Adrenal gland (tissue), 19 donors: ENCODE measurements at regions of chr2 and their contacts with region 1.

Region 1: GRCh38 chr2:102806250-102806837 is 44.5 kb downstream of the TMEM182 start:
- DNase-seq: peak; percentile 57 to 91 (median 75)
- H3K4me3 ChIP-seq: no peak overlapping the region
- H3K27ac ChIP-seq: no peak overlapping the region
- H3K4me1 ChIP-seq: no peaks in the 10 kb centered on the region
- H3K27me3 ChIP-seq: no peaks in the 10 kb centered on the region
- CTCF ChIP-seq: peak; percentile 47 to 74 (median 70)
- POLR2A ChIP-seq: no peak

Region 2: DNA sequence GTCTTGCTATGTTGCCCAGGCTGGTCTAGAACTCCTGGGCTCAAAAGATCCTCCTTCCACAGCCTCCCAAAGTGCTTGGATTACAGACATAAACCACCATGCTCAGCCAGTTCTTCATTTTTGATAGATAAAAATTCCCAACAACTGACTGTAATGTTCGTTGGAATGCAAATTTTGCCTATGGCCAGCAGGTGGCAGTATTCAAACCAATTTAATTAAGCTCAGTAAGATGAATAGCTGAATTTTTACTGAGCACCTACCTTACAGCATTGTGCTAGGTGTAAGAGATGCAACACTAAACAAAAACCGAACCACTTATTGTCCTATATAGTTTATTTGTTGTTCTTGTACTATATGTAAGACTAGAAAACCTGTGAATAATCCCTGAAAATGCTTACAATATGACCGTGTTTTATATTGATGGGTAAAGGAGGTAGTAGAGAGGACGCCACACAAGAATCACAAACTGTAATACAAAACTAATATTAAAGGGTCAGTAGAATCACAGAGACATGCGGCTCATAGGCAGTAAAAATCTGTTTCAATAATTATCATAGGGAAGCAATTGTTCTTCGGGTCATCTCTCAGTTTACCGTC is 52.7 kb before region 1 on chr2:
- intact Hi-C with region 1: loop called (anchors 5 to 10 kb)
- DNase-seq: peak in 6 of 7 donors; percentile 8 to 71 (median 40)
- H3K4me3 ChIP-seq: no peak overlapping the region
- H3K27ac ChIP-seq: no peak overlapping the region
- H3K4me1 ChIP-seq: no peaks in the 10 kb centered on the region
- H3K27me3 ChIP-seq: no peaks in the 10 kb centered on the region
- CTCF ChIP-seq: peak; percentile 53 to 85 (median 69)
- POLR2A ChIP-seq: no peak